Right ventricle myocardium superior (tissue), 1 donor: ENCODE measurements at regions of chr5 and their contacts with region 1.

Region 1: DNA sequence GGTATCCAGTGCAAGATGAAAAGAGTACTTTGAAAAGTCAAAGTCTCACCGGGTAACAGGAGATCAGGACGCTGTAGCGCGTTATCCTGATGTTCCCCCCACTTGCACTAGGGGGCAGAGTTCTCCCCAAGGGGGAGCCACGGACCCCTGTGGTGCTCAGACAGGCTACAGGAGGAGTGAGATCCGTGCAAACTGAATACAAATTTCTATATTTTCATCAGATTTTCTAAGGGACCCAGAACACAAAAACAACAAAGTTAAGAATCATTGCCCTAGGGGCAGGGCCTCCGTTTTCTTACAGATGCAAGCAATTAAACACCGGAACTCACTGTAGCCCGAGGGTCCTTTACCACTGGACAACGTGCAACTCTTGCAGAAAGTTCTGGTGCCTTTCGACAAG is 2.0 kb downstream of the MYO10 start:
- DNase-seq: peak; percentile 58
- ATAC-seq: peak; percentile 51

Region 2: GRCh38 chr5:17081142-17081541 is 147.0 kb after region 1 on chr5:
- intact Hi-C with region 1: no loop called
- DNase-seq: no peak
- ATAC-seq: no peak

Region 3: DNA sequence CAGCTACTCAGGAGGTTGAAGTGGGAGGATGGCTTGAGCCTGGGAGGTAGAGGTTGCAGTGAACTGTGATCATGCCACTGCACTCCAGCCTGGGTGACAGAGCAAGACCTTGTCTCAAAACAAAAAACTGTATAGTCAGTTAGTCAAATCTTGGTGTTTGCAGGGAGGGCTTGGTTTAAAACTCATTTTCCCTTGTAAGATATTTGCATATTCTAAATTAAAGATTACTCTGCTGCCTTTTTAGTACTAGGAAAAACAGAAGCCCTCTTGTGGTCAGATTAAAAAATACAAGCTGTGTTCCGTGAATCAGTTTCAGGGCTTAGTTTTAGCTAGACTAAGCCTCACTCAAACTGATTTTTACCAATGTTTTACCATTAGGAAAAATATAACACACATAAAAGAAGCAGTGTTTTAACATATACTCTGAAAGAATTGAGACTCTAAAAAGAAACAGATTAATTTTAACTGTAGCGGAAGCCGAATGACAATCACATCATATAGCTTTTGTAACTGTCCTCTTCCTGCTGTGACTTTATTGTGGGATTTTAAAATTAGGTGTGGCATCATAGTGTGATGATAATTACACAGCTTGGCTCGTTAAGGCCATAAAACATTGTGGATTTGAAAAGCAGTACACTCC is 198.4 kb after region 1 on chr5:
- intact Hi-C with region 1: loop called (anchors 2 kb)
- DNase-seq: no peak
- ATAC-seq: no peak

Region 4: GRCh38 chr5:17189381-17190036 is 255.4 kb after region 1 on chr5:
- intact Hi-C with region 1: loop called (anchors 5 kb)
- DNase-seq: peak; percentile 79
- ATAC-seq: peak; percentile 83